AG04450 (cell line): ENCODE measurements at regions of chr13 and their contacts with region 1.

Region 1: GRCh38 chr13:100392709-100393641 is 195.6 kb downstream of the GGACT start:
- DNase-seq: peak; percentile 98
- H3K4me3 ChIP-seq: no peak overlapping the region
- H3K27ac ChIP-seq: peak overlapping the region; percentile 94
- H3K27me3 ChIP-seq: no peaks in the 10 kb centered on the region
- CTCF ChIP-seq: no peak

Region 2: DNA sequence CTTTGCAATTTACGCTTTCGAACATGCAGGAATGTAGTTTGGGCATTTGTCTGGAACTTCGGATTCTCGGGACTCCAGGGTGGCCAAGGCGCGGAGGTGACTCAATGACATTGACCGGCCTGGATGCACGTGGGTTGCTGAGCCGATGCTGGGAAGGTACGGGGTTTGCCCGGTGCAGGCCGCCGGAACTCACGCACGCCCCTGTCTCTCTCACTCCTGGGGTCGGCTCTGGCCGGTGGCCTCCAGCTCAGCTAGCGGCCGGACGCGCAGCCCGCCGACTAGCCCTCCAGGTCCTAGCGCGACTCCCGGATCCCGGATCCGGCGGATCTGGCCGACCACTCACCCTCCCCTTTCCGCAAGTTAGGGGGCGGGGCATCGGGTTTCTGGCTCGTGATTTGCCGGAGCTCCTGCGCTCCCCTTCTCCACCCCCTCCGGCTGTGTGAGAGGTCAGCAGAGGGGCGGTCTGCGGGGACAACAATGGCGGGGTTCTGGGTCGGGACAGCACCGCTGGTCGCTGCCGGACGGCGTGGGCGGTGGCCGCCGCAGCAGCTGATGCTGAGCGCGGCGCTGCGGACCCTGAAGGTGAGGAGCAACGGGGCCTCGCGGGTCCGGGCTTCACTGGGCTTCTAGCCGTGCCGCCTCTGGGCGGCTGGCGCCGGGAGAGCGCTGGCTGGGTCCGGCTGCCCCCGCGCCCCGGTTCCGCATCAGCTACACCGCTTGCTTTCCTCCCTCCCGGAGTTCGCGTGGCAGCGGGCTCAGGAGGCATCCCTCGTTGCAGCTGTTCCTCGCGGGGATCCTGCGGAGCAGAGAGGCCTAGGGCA is 304.1 kb before region 1 on chr13 and contains the start of gene PCCA:
- CTCF ChIA-PET with region 1: no interaction called
- POLR2A ChIA-PET with region 1: interaction called, 14 read pairs
- DNase-seq: peak; percentile 75
- H3K4me3 ChIP-seq: peak within 1 kb of the TSS; percentile 88
- H3K27ac ChIP-seq: peak within 1 kb of the TSS; percentile 65
- H3K27me3 ChIP-seq: no peaks in the 10 kb centered on the region
- CTCF ChIP-seq: 0 out of 2 replicates have a peak, but pooled peaks have one; percentile 2
- polyA plus RNA-seq, gene PCCA: 15.0 and 22.6 TPM in 2 replicates

Region 3: DNA sequence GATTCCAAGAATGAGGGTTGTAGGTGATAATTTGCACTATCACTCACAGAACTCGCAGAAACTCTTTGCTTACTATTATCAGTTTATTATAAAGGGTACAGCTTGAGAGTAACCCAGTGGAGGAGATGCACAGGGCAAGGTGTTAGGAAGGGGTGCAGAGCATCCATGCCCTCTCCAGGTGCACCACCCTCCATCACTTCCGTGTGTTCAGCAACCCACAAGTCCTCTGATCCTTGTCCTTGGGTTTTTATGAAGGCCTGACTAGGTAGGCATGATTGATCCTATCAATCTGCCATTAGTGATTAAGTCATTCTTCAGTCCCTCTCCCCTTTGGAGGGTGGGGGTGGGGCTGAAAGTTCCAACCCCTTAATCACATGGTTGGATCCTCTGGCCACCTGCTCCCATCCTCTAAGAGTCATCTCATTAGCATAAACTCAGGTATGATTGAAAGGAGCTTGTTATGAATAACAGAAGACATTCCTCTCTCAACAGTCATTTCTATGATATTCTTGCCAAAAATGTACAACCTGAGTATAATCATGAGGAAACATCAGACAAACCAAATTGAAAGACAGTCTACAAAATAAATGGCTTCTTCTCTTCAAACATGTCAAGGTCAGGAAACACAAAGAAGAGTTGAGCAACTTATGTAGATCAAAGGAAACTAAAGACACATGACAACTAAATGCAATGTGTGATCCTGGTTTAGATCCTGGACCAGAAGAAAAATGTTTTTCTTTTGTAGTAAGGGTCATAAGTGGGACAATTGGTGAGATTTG is 78.7 kb before region 1 on chr13:
- CTCF ChIA-PET with region 1: no interaction called
- POLR2A ChIA-PET with region 1: no interaction called
- DNase-seq: no peak
- H3K4me3 ChIP-seq: no peak overlapping the region
- H3K27ac ChIP-seq: no peak overlapping the region
- H3K27me3 ChIP-seq: no peaks in the 10 kb centered on the region
- CTCF ChIP-seq: no peak

Region 4: DNA sequence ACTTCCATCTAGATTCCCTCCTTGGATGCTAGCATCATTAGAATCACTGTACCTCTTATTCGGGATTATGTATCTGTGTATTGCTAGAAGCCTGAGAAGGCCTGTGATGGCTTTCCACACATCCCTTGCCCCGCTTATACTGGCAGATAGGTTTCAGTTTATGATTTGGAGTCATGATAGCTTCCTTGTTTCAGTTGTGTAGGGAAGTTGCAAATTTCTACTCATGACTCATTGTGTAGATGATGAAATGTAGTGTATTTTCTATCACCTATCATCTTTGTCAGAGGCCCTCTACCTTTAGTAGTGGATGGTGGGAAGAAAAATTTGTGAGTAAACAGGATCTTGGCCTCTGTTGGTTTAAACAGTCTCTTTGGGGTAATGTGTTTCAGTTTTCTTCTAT is 30.4 kb after region 1 on chr13:
- CTCF ChIA-PET with region 1: no interaction called
- POLR2A ChIA-PET with region 1: interaction called, 10 read pairs
- DNase-seq: no peak
- H3K4me3 ChIP-seq: no peak overlapping the region
- H3K27ac ChIP-seq: no peak overlapping the region
- H3K27me3 ChIP-seq: no peaks in the 10 kb centered on the region
- CTCF ChIP-seq: no peak

Region 5: GRCh38 chr13:100707818-100708740 is 315.1 kb after region 1 on chr13:
- CTCF ChIA-PET with region 1: no interaction called
- POLR2A ChIA-PET with region 1: no interaction called
- DNase-seq: no peak
- H3K4me3 ChIP-seq: no peak overlapping the region
- H3K27ac ChIP-seq: no peak overlapping the region
- H3K27me3 ChIP-seq: peaks cover 2% of the 10 kb centered on the region
- CTCF ChIP-seq: no peak